ENCODE measurements at regions of chr5 and their contacts with region 1.

Region 1: GRCh38 chr5:95846554-95847260 is 24.2 kb upstream of the GLRX start:
- DNase-seq: peak; percentile 59
- H3K4me3 ChIP-seq: no peak overlapping the region
- H3K27ac ChIP-seq: no peak overlapping the region
- H3K27me3 ChIP-seq: no peaks in the 10 kb centered on the region
- CTCF ChIP-seq: peak; percentile 95

Region 2: GRCh38 chr5:94841598-94842322 is 1004.9 kb before region 1 on chr5:
- CTCF ChIA-PET with region 1: interaction called, 11 read pairs
- POLR2A ChIA-PET with region 1: no interaction called
- DNase-seq: no peak
- H3K4me3 ChIP-seq: no peak overlapping the region
- H3K27ac ChIP-seq: no peak overlapping the region
- H3K27me3 ChIP-seq: no peaks in the 10 kb centered on the region
- CTCF ChIP-seq: no peak

Region 3: DNA sequence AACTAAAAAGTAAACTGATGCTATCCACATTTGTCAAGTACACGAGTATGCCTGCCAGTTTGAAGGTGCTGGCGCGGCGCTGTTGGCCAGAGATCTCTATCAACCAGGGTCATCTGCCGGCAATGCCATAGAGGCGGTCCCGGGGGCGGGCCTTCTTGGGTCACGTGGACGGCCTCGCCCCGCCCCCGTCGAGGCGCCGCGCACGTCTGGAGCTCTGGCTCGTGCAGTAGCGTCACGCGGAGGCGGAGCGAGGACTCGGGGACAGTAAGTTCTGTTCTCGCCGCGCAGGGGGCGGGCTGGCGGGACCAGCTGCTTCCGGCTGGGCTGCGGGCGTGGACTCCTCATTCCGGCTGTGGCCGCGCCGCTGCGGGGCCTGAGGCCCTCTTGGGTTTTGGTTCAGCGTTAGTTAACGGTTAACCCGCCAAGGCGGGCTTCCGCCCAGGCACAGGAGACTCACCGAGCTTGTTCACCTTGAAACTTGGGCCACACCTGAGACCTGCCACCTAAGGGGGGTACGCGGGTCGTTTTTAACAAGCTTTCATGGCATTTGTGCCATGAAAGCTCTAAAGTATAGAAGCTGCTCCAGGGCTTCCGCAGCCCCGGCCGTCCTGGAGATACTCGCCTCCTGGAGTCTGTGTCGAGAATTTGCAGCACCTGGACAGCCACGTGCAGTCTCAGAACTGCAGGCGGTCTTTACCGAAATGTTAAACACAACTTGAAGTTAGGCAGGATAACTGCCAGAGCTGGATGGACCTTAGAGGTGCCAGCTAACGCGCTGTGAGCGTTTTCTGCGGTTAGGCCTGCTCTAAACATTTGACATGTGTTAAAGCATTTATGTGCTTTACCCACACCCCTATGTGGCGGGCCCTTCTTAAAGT is 199.9 kb before region 1 on chr5 and contains the start of gene RFESD:
- CTCF ChIA-PET with region 1: interaction called, 72 read pairs
- POLR2A ChIA-PET with region 1: interaction called, 3 read pairs
- DNase-seq: peak; percentile 82
- H3K4me3 ChIP-seq: peak within 1 kb of the TSS; percentile 61
- H3K27ac ChIP-seq: peak within 1 kb of the TSS; percentile 82
- H3K27me3 ChIP-seq: no peaks in the 10 kb centered on the region
- CTCF ChIP-seq: 0 out of 2 replicates have a peak, but pooled peaks have one; percentile 18
- polyA plus RNA-seq, gene RFESD: 3.0 and 3.8 TPM in 2 replicates

Region 4: GRCh38 chr5:95669540-95669939 is 177.2 kb before region 1 on chr5:
- CTCF ChIA-PET with region 1: interaction called, 49 read pairs
- POLR2A ChIA-PET with region 1: no interaction called
- DNase-seq: peak; percentile 97
- H3K4me3 ChIP-seq: no peak overlapping the region
- H3K27ac ChIP-seq: peak overlapping the region; percentile 71
- H3K27me3 ChIP-seq: no peaks in the 10 kb centered on the region
- CTCF ChIP-seq: no peak

Region 5: GRCh38 chr5:95822542-95823181 is 24.0 kb before region 1 on chr5 and contains the start of gene GLRX:
- CTCF ChIA-PET with region 1: interaction called, 8 read pairs
- POLR2A ChIA-PET with region 1: interaction called, 12 read pairs
- DNase-seq: peak; percentile 59
- H3K4me3 ChIP-seq: peak within 1 kb of the TSS; percentile 94
- H3K27ac ChIP-seq: peak within 1 kb of the TSS; percentile 100
- H3K27me3 ChIP-seq: no peaks in the 10 kb centered on the region
- CTCF ChIP-seq: no peak
- polyA plus RNA-seq, gene GLRX: 233 and 306 TPM in 2 replicates

Region 6: GRCh38 chr5:95858661-95859326 is 12.1 kb after region 1 on chr5:
- CTCF ChIA-PET with region 1: interaction called, 13 read pairs
- POLR2A ChIA-PET with region 1: no interaction called
- DNase-seq: peak; percentile 98
- H3K4me3 ChIP-seq: peak overlapping the region; percentile 28
- H3K27ac ChIP-seq: peak overlapping the region; percentile 100
- H3K27me3 ChIP-seq: no peaks in the 10 kb centered on the region
- CTCF ChIP-seq: peak; percentile 98

Region 7: DNA sequence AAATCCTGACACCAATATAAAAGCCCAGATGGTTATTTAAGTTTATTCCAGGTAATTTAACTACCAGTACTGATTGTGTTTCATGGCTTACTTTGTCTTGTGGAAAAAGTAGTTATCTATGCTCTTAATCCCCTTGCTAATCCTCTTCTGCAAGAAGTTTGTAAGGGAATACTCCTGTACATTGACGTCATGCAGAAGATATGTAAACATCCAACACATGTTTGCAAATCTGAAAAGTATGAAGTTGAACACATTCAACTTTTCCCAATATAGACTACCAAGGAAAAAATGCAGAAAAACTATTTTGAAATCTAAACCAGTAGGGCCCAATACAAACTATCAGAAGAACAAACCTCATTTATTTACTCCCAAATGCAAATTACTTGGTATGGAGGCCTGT is 171.2 kb after region 1 on chr5:
- CTCF ChIA-PET with region 1: no interaction called
- POLR2A ChIA-PET with region 1: no interaction called
- DNase-seq: peak; percentile 88
- H3K4me3 ChIP-seq: no peak overlapping the region
- H3K27ac ChIP-seq: no peak overlapping the region
- H3K27me3 ChIP-seq: no peaks in the 10 kb centered on the region
- CTCF ChIP-seq: no peak

Region 8: GRCh38 chr5:96151891-96152290 is 305.2 kb after region 1 on chr5:
- CTCF ChIA-PET with region 1: no interaction called
- POLR2A ChIA-PET with region 1: no interaction called
- DNase-seq: no peak
- H3K4me3 ChIP-seq: no peak overlapping the region
- H3K27ac ChIP-seq: no peak overlapping the region
- H3K27me3 ChIP-seq: no peaks in the 10 kb centered on the region
- CTCF ChIP-seq: no peak